ENCODE measurements at regions of chr17 and their contacts with region 1.

Region 1: DNA sequence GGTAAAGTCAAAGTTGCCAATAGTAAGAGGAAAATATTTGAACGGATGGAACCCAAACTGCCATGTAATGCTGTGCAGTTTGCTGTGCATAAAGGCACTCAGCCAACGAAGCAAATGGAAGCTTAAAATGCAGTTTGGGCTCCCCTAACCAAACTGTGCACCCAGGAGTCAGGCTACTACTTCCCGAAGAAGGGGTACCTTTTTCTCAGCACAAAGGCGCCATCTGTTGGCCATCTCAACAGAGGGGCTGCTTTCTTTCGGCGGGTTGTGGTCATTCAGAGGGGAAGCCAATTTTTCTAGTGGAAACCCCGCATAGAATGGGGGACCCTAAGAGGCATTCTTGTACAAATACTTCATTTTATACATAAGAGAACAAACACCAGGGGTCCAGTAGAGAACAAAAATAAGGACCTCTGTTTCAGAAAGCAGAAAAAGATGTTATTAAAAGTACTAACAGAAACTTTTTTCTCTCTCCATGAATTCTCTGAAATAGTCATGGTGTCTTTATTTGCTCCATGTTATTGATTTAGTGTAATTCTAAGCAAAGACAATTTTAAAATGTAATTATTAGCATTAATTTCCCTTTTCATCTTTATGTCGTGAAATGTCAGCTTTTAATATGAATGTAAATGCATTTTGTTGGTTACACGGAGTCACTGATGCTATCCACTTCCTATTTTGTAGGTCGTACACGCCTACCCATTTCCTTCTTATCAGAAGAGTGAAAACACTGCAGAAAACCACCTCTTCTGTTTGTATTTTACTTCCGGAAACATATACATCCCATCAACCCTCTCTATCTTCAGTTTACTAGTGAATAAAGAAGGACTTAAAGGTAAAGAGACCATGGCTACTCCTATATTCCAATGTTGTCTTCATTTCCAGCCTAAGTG is 453.3 kb downstream of the KCNJ2 start:
- DNase-seq: peak; percentile 60 to 96 (median 84)

Region 2: GRCh38 chr17:69607162-69607834 is 1015.3 kb before region 1 on chr17:
- intact Hi-C with region 1: loop called (anchors 10 kb)
- DNase-seq: peak; percentile 56 to 91 (median 80)

Region 3: DNA sequence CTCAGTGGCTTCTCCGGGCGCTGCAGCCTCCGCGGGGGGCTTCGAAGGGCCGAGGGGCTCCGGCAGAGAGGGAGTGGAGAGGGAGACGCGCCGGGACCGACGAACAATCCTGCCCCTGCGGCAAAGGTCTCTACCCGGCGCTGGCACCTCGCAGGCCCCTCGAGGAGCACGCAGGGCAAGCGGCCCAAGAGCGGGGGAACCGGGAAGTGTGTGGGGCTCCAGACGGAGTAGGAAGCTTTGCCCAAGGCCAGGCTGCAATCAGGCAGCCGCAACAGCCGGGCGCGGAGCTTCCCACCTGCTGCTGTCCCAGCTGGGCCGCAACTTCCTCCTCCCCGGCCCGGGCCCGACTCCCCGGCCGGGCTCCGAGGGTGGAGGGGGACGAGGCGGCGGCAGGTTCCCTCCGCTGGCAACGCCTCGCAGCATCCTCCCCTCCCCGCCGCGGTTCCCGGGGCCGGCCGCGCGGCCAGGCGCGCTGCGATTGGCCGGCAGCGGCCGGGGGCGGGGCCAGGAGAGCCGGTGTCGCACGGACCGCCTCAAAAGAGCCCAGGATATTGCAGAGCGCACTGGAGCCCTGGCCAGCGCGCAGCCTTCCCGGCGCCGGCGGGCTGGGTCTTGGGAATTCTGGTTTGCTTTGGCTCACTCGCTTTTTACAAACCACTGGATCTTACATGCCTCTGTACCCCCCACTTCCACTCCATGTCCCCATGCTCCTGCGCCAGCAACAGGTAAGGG is 453.5 kb before region 1 on chr17 and contains the start of gene KCNJ2:
- intact Hi-C with region 1: loop called (anchors 5 kb)
- DNase-seq: peak; percentile 77 to 96 (median 93)